ENCODE measurements at regions of chr6 and their contacts with region 1.

Region 1: DNA sequence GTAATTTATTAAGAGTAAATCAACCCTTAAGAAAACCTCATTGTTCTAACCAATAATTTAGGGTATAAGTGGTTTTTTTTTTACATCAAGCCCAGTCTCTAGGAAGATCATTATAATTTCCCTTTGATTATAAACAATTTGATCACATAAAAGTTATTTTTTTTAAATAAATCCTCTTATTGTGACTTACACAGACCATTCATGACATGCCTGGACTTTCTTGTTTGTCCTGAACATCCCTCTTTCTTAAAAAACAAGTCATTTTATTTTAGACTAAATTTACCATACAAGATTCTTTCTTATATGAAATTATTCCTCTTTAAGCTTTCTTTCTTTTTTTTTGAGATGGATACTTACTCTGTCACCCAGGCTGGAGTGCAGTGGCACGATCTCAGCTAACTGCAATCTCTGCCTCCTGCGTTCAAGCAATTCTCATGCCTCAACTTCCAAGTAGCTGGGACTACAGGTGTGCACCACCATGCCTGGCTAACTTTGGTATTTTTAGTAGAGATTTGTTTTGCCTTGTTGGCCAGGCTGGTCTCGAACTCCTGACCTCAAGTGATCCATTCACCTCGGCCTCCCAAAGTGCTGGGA is 53.6 kb upstream of the AGPAT4 start:
- DNase-seq: no peak
- H3K4me3 ChIP-seq: no peak overlapping the region
- H3K27ac ChIP-seq: no peak overlapping the region
- H3K4me1 ChIP-seq: peaks cover 0 to 4% (median 0%) of the 10 kb centered on the region in 4 donors
- H3K27me3 ChIP-seq: no peaks in the 10 kb centered on the region
- CTCF ChIP-seq: no peak
- EP300 ChIP-seq: no peak
- POLR2A ChIP-seq: no peak

Region 2: GRCh38 chr6:161273752-161274487 is 53.5 kb before region 1 on chr6 and contains the start of gene AGPAT4:
- in situ Hi-C with region 1: no loop called
- intact Hi-C with region 1: no loop called
- DNase-seq: peak; percentile 70
- H3K4me3 ChIP-seq: peak within 1 kb of the TSS; percentile 44 to 69 (median 50)
- H3K27ac ChIP-seq: peak within 1 kb of the TSS; percentile 72 to 79 (median 75)
- H3K4me1 ChIP-seq: peaks cover 3 to 35% (median 9%) of the 10 kb centered on the region in 4 donors
- H3K27me3 ChIP-seq: no peaks in the 10 kb centered on the region
- CTCF ChIP-seq: no peak
- EP300 ChIP-seq: no peak
- POLR2A ChIP-seq: peak; percentile 41
- total RNA-seq, gene AGPAT4: 2.2 to 6.4 (median 4.4) TPM

Region 3: DNA sequence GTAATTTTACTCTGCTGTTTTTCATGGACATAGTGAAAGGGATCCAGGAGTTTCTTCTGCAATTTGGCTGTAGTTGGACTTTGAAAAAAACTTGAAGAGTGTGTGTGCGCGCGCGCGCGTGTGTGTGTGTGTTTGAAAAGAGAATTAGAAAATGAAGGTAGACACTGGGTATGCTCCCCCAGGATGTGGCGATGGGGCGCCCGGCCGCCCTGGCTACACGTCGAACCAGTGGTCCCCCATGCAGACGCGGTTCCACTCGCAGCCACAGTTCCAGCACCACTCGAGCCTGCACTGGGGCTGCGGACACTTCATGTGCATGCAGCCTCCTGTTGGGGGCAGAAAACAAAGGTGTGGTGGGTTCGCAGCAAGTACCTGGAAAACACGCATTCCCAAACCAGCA is 22.4 kb after region 1 on chr6:
- in situ Hi-C with region 1: no loop called
- intact Hi-C with region 1: loop called (anchors 1 kb)
- DNase-seq: no peak
- H3K4me3 ChIP-seq: no peak overlapping the region
- H3K27ac ChIP-seq: no peak overlapping the region
- H3K4me1 ChIP-seq: no peaks in the 10 kb centered on the region
- H3K27me3 ChIP-seq: no peaks in the 10 kb centered on the region
- CTCF ChIP-seq: no peak
- EP300 ChIP-seq: no peak
- POLR2A ChIP-seq: no peak

Region 4: GRCh38 chr6:163170294-163170883 is 1842.9 kb after region 1 on chr6:
- in situ Hi-C with region 1: no loop called
- intact Hi-C with region 1: no loop called
- DNase-seq: no peak
- H3K4me3 ChIP-seq: no peak overlapping the region
- H3K27ac ChIP-seq: no peak overlapping the region
- H3K4me1 ChIP-seq: no peaks in the 10 kb centered on the region
- H3K27me3 ChIP-seq: no peaks in the 10 kb centered on the region
- CTCF ChIP-seq: peak; percentile 30 to 52 (median 37)
- EP300 ChIP-seq: no peak
- POLR2A ChIP-seq: no peak

Measured in transverse colon (tissue), 4 donors.